Endothelial cell of umbilical vein (primary cell): ENCODE measurements at regions of chr2 and their contacts with region 1.

Region 1: DNA sequence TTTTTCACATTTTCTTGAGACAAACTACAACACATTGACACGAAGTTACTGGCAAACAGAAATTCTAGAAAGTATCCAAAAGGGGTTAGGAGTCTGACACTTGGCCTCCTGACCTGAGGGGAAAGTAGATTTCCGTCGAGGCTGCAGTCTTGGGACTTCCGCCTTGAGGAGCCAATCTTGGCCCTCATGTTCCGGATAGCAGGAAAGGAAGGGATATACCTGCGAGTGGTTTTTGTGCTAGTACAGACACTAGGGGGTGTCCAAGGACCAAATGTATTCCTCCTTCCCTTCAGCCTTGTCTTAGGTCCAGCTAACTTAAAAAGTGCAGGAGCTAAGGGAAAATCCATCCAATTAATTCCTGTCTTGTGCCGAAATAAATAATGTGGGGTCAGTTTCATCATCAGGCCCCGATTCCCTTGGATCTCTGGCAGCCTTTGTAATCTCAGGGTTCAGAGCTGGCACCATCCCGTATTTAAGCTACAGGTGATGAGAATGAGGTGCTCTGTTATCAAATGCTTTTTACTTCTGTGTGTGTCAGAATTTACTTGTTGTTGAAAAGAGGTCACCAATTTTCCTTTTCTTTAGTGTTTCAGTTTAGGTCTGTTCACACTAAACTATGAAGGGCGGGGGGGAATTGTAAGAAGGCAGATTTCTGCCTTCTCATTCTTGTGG is 330.2 kb upstream of the FANCL start:
- DNase-seq: peak; percentile 84
- H3K4me3 ChIP-seq: no peak overlapping the region
- H3K27ac ChIP-seq: no peak overlapping the region
- H3K4me1 ChIP-seq: peaks cover 2% of the 10 kb centered on the region
- H3K27me3 ChIP-seq: no peaks in the 10 kb centered on the region
- CTCF ChIP-seq: peak; percentile 69 to 81
- POLR2A ChIP-seq: no peak

Region 2: DNA sequence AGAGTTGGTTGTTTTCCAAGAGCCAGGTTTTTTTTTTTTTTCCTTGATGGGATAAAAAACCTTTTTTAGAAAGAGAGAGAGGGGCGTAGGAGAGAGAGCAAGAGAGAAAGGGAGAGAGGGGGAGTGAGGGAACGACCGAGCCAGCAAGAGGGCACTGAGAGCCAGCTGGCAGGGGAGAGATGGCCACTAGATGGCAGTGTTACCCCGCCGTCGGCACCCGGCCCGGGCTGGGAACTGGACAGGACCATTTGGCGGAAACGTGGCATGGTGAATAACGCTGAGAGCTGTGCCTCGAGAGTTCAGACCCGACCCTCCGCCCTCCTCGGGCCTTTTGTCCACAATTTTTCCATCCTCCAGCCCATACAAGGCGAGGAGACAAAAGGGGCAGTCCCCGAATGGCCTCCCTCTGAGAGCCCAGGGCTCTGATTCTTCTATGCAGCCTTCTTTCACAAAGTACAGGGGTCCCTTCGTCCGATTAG is 811.5 kb before region 1 on chr2:
- CTCF ChIA-PET with region 1: no interaction called
- POLR2A ChIA-PET with region 1: no interaction called
- dilution Hi-C with region 1: no loop called
- intact Hi-C with region 1: loop called (anchors 1 kb)
- DNase-seq: peak; percentile 77
- H3K4me3 ChIP-seq: peak overlapping the region in 1 of 3 experiments; percentile 23
- H3K27ac ChIP-seq: no peak overlapping the region
- H3K4me1 ChIP-seq: peaks cover 4% of the 10 kb centered on the region
- H3K27me3 ChIP-seq: peaks cover 1 to 5% of the 10 kb centered on the region in 2 experiments
- CTCF ChIP-seq: peak; percentile 85 to 96
- POLR2A ChIP-seq: no peak

Region 3: DNA sequence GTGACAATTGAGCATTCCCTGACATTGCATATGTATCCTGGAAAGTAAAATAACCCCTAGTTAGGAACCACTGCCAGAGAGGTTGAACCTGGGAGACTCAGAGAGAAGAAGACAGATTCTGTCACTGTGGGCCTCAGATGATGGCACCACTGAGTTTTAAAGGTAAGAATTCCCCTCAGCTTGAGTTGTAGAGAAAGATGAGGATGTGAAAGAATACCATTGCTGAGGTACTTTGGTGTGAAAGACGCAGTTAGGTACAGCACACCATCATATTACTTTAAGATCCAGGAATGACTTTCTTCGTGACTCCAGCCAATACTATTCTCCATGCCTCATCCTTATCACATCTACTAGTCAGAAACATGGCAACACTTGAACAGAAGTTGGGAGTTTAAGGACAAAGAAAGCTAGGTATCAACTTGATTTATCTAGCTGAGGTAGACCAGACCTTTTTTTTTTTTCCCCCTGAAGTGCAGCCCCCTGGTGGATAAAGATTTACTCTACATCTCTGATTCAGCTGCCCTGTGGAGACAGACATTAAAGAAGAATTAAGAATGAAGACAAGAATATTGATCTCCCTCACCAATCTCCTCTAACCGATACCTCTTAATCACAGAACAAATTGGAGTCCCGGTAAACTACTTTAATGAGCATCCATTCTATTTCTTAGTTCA is 300.3 kb after region 1 on chr2:
- CTCF ChIA-PET with region 1: interaction called, 12 read pairs
- POLR2A ChIA-PET with region 1: no interaction called
- dilution Hi-C with region 1: no loop called
- intact Hi-C with region 1: loop called (anchors 1 kb)
- DNase-seq: no peak
- H3K4me3 ChIP-seq: no peak overlapping the region
- H3K27ac ChIP-seq: no peak overlapping the region
- H3K4me1 ChIP-seq: no peaks in the 10 kb centered on the region
- H3K27me3 ChIP-seq: no peaks in the 10 kb centered on the region
- CTCF ChIP-seq: no peak
- POLR2A ChIP-seq: no peak

Region 4: DNA sequence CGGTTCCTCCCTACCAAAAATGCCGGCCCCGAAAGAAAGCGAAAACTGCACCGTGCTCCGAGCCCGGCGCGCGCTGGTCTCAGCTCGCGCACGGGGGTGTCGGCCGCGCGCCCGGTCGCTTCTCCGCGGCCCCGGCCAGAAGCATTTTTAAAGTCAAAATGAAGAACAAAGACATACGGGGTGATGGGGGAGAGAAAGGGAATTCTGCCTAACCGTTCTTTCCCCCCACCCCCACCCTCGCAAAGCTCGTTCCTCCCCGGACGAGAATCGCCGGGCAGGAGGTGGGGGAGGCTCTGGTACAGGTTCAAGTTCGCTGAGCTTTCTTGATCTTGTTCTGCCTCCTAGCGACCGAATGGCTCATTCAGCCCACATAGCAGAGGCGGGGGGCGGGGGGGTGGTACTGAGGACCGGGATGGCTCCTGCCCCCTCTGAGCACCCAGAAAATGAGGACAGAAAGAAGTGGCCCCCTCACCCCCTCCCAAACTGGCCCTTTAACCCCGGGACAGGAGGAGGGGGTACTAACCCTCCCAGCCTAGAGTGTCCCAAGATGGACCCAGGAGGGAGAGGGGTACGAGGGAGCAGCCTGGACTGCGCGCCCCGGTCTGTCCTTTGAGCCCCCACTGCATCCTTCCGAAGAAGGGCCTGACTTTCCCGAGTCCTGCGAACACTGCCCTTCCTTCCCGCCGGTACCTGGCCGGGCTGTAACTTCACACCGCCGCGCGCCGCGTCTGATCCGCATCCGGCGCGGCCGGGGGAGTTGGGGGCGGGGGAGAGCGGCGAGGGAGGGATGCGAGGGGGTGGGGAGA is 1979.1 kb after region 1 on chr2:
- CTCF ChIA-PET with region 1: interaction called, 12 read pairs
- POLR2A ChIA-PET with region 1: no interaction called
- dilution Hi-C with region 1: no loop called
- intact Hi-C with region 1: loop called (anchors 1 kb)
- DNase-seq: peak; percentile 52
- H3K4me3 ChIP-seq: peak overlapping the region; percentile 44 to 67 (median 60)
- H3K27ac ChIP-seq: no peak overlapping the region
- H3K4me1 ChIP-seq: peaks cover 22% of the 10 kb centered on the region
- H3K27me3 ChIP-seq: peaks cover 40 to 68% of the 10 kb centered on the region in 2 experiments
- CTCF ChIP-seq: peak; percentile 39 to 61
- POLR2A ChIP-seq: no peak